ENCODE measurements at regions of chr11 and their contacts with region 1.

Region 1: DNA sequence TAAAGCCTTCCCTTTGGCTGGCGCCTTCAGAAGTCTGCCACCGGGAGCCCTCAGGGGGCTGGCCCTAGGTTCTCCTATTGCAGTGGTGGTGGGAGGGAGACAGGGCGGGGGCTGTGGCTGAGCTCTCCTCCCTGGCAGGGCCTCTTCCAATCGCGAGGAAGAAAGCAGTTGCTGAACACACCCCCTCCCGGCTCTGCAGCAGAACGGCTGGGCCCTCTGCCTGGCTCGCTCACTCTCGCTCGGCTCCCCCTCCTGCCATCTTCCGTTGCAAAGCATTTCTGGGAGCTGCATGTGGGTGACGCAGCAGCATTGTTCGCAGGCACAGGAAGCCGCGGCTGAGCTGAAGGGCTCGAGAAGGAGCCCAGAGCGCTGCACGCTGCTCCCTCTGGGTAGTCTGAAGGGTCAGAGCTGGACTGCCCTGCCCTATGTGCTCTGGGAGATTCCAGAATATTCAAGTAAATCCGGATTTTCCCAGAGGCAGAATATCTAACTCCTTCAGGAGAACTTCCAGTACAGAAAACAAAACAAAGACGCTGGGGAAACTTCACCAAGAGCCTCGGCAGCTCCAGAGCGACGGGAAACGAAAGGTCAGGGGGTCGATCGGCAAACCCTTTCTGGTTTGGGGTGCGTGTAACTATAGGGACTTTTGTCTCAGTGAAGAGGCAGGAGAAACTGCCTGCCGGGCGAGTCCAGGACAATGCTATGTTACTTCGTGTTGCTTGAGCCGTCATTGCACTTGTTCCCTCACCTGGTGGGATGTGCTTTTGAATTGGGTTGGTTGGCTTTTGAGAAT is 26.3 kb upstream of the GRK2 start:
- DNase-seq: peak; percentile 99
- ATAC-seq: peak; percentile 97
- H3K4me3 ChIP-seq: peak overlapping the region; percentile 67
- H3K27ac ChIP-seq: peak overlapping the region; percentile 90
- H3K4me1 ChIP-seq: peaks cover 13% of the 10 kb centered on the region
- H3K27me3 ChIP-seq: no peaks in the 10 kb centered on the region
- CTCF ChIP-seq: no peak
- POLR2A ChIP-seq: peak; percentile 97
- RAD21 ChIP-seq: no peak

Region 2: DNA sequence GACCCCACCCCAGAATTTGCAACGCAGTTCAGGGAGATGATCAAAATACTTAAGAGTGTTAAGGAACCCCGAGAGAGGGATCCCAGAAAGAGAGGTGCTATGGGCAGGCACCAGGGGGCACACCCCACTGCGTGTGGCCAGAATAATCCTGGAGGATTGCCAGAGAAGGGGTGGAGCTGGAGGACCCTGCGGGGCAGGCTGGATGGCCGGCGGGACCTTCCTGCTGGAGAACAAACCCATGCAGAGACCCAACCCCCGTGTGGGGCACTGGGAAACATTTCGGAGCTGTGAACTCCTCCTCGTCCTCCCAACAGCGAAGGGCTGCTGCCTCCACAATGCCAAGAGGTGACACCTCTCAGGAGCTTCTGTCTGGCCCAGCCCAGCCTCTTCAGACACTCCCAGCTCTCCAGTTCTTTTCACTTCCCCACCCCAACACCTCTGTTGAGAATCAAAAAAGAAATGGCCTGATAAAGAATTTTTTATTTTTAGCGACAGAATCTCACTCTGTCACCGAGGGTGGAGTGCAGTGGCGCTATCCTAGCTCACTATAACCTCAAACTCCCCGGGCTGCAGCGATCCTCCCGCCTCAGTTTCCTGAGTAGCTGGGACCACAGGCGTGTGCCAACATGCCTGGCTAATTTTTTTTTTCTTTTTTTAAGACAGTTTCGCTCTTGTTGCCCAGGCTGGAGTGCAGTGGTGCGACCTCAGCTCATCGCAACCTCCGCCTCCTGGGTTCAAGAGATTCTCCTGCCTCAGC is 157.8 kb before region 1 on chr11:
- CTCF ChIA-PET with region 1: no interaction called
- POLR2A ChIA-PET with region 1: no interaction called
- dilution Hi-C with region 1: no loop called
- in situ Hi-C with region 1: no loop called
- intact Hi-C with region 1: loop called (anchors 5 kb)
- DNase-seq: no peak
- ATAC-seq: no peak
- H3K4me3 ChIP-seq: no peak overlapping the region
- H3K27ac ChIP-seq: no peak overlapping the region
- H3K4me1 ChIP-seq: no peaks in the 10 kb centered on the region; the same call in 1 of the 2 replicates
- H3K27me3 ChIP-seq: peaks cover 2% of the 10 kb centered on the region; the same call in 1 of the 2 replicates
- CTCF ChIP-seq: no peak
- POLR2A ChIP-seq: no peak
- RAD21 ChIP-seq: no peak

Region 3: DNA sequence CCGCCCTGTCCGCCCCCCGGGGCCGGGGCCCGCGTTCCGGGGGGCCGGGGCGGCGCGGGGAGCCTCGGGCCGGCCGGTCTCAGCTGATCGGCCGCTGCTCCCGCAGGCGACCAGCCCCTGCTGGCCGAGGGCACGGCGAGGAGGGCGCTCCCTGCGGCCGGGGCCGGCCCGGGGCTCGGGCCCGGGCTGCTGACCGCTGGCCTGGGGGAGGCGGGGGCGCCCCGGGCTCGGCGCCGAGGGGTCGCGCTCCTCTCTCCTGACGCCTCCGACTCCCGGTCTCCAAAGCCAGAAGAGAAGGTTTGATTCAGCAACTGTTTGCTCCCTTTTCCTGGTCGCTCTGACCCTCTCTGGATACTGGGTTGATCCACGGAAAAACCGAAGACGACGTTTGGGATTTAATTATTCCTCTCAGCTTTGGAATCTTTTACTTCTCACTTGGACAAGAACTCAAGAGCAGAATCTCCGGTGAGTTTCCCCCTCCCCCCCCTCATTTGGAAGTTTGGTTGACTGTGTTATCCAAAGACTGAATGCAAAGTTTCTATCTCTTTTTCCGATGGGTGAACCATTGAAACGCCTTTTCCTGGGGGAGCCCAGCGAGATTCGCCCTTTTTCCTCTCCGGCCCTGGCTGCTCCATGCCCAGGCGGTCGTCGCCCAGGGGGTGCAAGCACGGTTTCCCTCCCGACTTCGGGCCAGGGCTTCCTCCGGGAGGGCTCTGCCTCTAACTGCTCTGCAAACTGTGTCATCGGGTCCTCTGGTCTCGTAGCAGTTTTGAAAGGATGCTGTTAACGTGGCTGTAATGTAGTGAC is 120.2 kb before region 1 on chr11:
- CTCF ChIA-PET with region 1: no interaction called
- POLR2A ChIA-PET with region 1: no interaction called
- dilution Hi-C with region 1: no loop called
- in situ Hi-C with region 1: no loop called
- intact Hi-C with region 1: loop called (anchors 2 kb)
- DNase-seq: no peak
- ATAC-seq: peak; percentile 21
- H3K4me3 ChIP-seq: peak overlapping the region; percentile 99
- H3K27ac ChIP-seq: peak overlapping the region; percentile 92
- H3K4me1 ChIP-seq: peaks cover 8% of the 10 kb centered on the region
- H3K27me3 ChIP-seq: no peaks in the 10 kb centered on the region
- CTCF ChIP-seq: peak; percentile 29; the same call in 1 of the 2 replicates
- POLR2A ChIP-seq: no peak
- RAD21 ChIP-seq: no peak

Region 4: GRCh38 chr11:67178878-67179277 is 61.1 kb before region 1 on chr11:
- CTCF ChIA-PET with region 1: no interaction called
- POLR2A ChIA-PET with region 1: no interaction called
- dilution Hi-C with region 1: no loop called
- in situ Hi-C with region 1: no loop called
- intact Hi-C with region 1: loop called (anchors 10 kb)
- DNase-seq: peak; percentile 77
- ATAC-seq: peak; percentile 90
- H3K4me3 ChIP-seq: no peak overlapping the region
- H3K27ac ChIP-seq: no peak overlapping the region
- H3K4me1 ChIP-seq: peaks cover 9% of the 10 kb centered on the region
- H3K27me3 ChIP-seq: no peaks in the 10 kb centered on the region
- CTCF ChIP-seq: no peak
- POLR2A ChIP-seq: no peak
- RAD21 ChIP-seq: no peak

Region 5: DNA sequence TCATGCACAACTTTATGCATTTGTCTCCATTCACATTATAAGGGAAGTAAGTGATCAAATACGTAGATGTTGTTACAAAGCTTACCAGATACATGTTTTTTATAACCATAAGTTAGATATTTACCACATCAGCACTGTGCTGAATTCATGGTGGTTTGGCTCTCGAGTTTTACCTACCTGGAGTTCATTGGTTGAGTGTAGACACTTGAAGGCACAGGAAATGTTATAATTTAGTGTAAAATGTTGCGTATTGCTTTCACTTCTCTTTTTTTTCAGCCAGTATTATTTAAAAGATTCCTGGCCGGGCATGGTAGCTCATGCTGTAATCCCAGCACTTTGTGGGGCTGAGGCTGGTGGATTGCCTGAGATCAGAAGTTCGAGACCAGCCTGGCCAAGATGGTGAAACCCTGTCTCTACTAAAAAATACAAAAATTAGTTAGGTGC is 26.8 kb before region 1 on chr11:
- CTCF ChIA-PET with region 1: no interaction called
- POLR2A ChIA-PET with region 1: no interaction called
- dilution Hi-C with region 1: no loop called
- in situ Hi-C with region 1: no loop called
- intact Hi-C with region 1: no loop called
- DNase-seq: no peak
- ATAC-seq: no peak
- H3K4me3 ChIP-seq: no peak overlapping the region
- H3K27ac ChIP-seq: no peak overlapping the region
- H3K4me1 ChIP-seq: no peaks in the 10 kb centered on the region
- H3K27me3 ChIP-seq: no peaks in the 10 kb centered on the region
- CTCF ChIP-seq: no peak
- POLR2A ChIP-seq: no peak
- RAD21 ChIP-seq: no peak

Region 6: GRCh38 chr11:67277231-67277961 is 37.4 kb after region 1 on chr11:
- CTCF ChIA-PET with region 1: no interaction called
- POLR2A ChIA-PET with region 1: no interaction called
- dilution Hi-C with region 1: no loop called
- in situ Hi-C with region 1: no loop called
- intact Hi-C with region 1: no loop called
- DNase-seq: peak; percentile 64
- ATAC-seq: peak; percentile 96
- H3K4me3 ChIP-seq: peak overlapping the region; percentile 31
- H3K27ac ChIP-seq: peak overlapping the region; percentile 93
- H3K4me1 ChIP-seq: peaks cover 22% of the 10 kb centered on the region
- H3K27me3 ChIP-seq: no peaks in the 10 kb centered on the region
- CTCF ChIP-seq: no peak
- POLR2A ChIP-seq: no peak
- RAD21 ChIP-seq: no peak

Region 7: DNA sequence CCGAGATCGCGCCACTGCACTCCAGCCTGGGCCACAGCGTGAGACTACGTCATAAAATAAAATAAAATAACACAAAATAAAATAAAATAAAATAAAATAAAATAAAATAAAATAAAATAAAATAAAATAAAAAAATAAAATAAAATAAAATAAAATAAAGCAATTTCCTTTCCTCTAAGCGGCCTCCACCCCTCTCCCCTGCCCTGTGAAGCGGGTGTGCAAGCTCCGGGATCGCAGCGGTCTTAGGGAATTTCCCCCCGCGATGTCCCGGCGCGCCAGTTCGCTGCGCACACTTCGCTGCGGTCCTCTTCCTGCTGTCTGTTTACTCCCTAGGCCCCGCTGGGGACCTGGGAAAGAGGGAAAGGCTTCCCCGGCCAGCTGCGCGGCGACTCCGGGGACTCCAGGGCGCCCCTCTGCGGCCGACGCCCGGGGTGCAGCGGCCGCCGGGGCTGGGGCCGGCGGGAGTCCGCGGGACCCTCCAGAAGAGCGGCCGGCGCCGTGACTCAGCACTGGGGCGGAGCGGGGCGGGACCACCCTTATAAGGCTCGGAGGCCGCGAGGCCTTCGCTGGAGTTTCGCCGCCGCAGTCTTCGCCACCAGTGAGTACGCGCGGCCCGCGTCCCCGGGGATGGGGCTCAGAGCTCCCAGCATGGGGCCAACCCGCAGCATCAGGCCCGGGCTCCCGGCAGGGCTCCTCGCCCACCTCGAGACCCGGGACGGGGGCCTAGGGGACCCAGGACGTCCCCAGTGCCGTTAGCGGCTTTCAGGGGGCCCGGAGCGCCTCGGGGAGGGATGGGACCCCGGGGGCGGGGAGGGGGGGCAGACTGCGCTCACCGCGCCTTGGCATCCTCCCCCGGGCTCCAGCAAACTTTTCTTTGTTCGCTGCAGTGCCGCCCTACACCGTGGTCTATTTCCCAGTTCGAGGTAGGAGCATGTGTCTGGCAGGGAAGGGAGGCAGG is 343.5 kb after region 1 on chr11 and contains the start of gene GSTP1:
- CTCF ChIA-PET with region 1: no interaction called
- POLR2A ChIA-PET with region 1: no interaction called
- dilution Hi-C with region 1: no loop called
- in situ Hi-C with region 1: no loop called
- intact Hi-C with region 1: no loop called
- DNase-seq: peak; percentile 88
- ATAC-seq: peak; percentile 96
- H3K4me3 ChIP-seq: peak within 1 kb of the TSS; percentile 77
- H3K27ac ChIP-seq: peak within 1 kb of the TSS; percentile 84
- H3K4me1 ChIP-seq: peaks cover 14% of the 10 kb centered on the region
- H3K27me3 ChIP-seq: peaks cover 10% of the 10 kb centered on the region; the same call in 1 of the 2 replicates
- CTCF ChIP-seq: peak; percentile 88
- POLR2A ChIP-seq: peak; percentile 98
- RAD21 ChIP-seq: peak; percentile 62
- total RNA-seq, gene GSTP1: 947 and 1,000 TPM in 2 replicates

Measured in IMR-90 (cell line).